CD14-positive monocyte (primary cell): ENCODE measurements at regions of chr16 and their contacts with region 1.

Region 1: GRCh38 chr16:82201931-82202330 is 31.9 kb upstream of the MPHOSPH6 start:
- DNase-seq: no peak
- H3K4me3 ChIP-seq: no peak overlapping the region
- H3K4me3 Mint-ChIP-seq: no peak overlapping the region
- H3K27ac ChIP-seq: no peak overlapping the region
- H3K27ac Mint-ChIP-seq: peak overlapping the region in 2 of 7 donors; percentile 8 to 70
- H3K4me1 ChIP-seq: peaks cover 1 to 3% of the 10 kb centered on the region in 2 donors
- H3K4me1 Mint-ChIP-seq: peaks cover 31% of the 10 kb centered on the region
- H3K27me3 ChIP-seq: no peaks in the 10 kb centered on the region
- H3K27me3 Mint-ChIP-seq: peaks cover 2 to 5% (median 2%) of the 10 kb centered on the region in 3 donors
- CTCF ChIP-seq: no peak

Region 2: DNA sequence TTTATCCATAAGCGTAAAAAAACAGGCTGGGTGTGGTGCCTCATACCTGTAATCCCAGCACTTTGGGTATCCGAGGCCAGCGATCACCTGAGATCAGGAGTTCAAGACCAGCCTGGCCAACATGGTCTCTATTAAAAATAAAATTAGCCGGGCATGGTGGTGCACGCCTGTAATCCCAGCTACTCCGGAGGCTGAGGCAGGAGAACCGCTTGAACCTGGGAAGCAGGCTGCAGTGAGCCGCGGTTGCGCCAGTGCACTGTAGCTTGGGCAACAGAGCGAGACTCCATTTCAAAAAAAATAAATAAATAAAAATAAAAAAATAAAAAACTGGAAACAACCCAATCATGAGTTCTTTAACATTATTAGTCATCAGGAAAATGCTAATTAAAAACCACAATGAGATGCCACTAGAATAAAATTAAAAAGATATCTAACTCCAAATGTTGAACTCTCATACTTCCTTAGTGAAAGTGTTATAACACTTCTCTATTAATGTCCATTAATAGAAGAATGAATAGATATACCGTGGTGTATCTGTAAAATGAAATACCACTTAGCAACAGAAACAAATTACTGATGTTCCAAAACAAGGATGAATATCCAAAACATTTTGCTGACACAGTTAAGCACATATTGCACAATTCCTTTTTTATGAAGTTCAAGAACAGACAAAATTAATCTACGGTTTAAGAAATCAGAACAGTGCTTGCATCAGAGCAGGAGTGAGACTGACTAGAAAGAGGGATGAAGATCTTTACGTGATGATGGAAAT is 45.0 kb before region 1 on chr16:
- intact Hi-C with region 1: loop called in 1 of 2 experiments (anchors 5 kb)
- DNase-seq: peak; percentile 7 to 26 (median 19)
- H3K4me3 ChIP-seq: no peak overlapping the region
- H3K4me3 Mint-ChIP-seq: no peak overlapping the region
- H3K27ac ChIP-seq: peak overlapping the region in 1 of 2 donors; percentile 39
- H3K27ac Mint-ChIP-seq: peak overlapping the region; percentile 61 to 90 (median 70)
- H3K4me1 ChIP-seq: peaks cover 4 to 6% of the 10 kb centered on the region in 2 donors
- H3K4me1 Mint-ChIP-seq: peaks cover 10% of the 10 kb centered on the region
- H3K27me3 ChIP-seq: no peaks in the 10 kb centered on the region
- H3K27me3 Mint-ChIP-seq: peaks cover 0 to 3% (median 0%) of the 10 kb centered on the region in 3 donors
- CTCF ChIP-seq: no peak